Dendritic cell treated with granulocyte-macrophage colony-stimulating factor and Interleukin-4, amounts not matched to agents 40 ng/mL and 50 ng/mL, for 4 days (primary cell): ENCODE measurements at regions of chr2 and their contacts with region 1.

Region 1: GRCh38 chr2:113940891-113941290 is 51.0 kb downstream of the ACTR3 start:
- H3K4me3 Mint-ChIP-seq: no peak overlapping the region
- H3K27ac Mint-ChIP-seq: no peak overlapping the region
- H3K4me1 Mint-ChIP-seq: no peaks in the 10 kb centered on the region
- H3K27me3 Mint-ChIP-seq: no peaks in the 10 kb centered on the region

Region 2: GRCh38 chr2:113910110-113910717 is 30.7 kb before region 1 on chr2:
- intact Hi-C with region 1: loop called (anchors 5 kb)
- H3K4me3 Mint-ChIP-seq: no peak overlapping the region
- H3K27ac Mint-ChIP-seq: peak overlapping the region; percentile 4
- H3K4me1 Mint-ChIP-seq: peaks cover 47% of the 10 kb centered on the region
- H3K27me3 Mint-ChIP-seq: no peaks in the 10 kb centered on the region